Activated CD8-positive, alpha-beta T cell treated with anti-CD3 and anti-CD28 coated beads, Interleukin-2, amount 10 ng/mL, durations not matched to agents 7 days and 5 days (primary cell): ENCODE measurements at regions of chr13 and their contacts with region 1.

Region 1: DNA sequence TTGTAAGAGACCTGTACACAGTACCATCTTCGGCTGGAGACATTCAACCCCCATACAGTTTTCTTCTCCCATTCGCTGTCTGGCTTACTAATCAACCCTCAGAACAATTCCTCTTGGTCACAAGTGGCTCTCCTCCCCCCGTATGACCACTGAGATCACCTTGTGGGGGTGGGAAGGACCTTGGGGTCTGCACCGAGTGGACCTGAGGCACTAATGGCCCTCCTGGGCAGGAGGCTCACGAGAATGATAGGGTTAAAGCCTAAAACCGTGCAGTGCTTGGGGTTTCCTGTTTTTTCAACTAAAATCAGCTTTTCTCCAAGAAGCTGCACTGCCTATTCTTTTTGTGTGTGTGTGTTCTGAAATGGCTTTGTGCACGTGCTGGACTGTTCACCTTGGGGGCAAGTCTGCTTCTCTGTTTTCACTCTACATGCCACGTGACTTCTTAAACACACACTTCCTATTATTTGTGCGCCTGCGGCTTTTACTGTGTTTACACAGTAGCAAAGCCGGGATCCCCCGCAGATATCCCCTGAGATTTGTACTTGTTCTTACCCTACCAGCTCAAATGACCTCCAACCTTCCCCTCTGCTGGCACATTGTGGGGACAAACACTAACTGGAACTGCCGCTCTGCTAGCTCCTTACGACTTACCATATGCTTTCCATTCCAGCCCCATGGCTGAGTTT is 12.3 kb downstream of the RBM26 start:
- DNase-seq: peak; percentile 59
- ATAC-seq: peak; percentile 58
- H3K4me3 Mint-ChIP-seq: peak overlapping the region; percentile 48
- H3K27ac Mint-ChIP-seq: peak overlapping the region; percentile 68
- H3K4me1 Mint-ChIP-seq: peaks cover 50% of the 10 kb centered on the region
- H3K27me3 Mint-ChIP-seq: no peaks in the 10 kb centered on the region

Region 2: DNA sequence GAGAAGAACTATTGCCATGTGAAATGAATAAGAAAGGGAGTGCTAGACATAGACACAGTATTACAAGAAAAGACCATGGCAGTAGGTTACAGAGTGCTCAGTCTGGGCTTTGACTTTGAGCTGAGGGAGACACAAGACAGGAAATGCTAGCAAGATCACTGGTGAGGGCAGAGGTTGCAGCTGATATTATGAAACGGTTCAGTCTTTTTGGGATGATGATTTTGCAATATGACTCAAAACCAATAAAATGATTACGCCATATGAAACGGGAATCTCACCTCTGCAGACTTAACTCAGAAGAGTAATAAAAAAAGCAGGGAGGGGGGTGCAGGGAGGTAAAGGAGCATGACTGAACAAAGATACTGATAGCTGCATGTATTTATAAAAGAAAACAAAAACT is 110.7 kb before region 1 on chr13:
- CTCF ChIA-PET with region 1: no interaction called
- POLR2A ChIA-PET with region 1: no interaction called
- DNase-seq: no peak
- ATAC-seq: no peak
- H3K4me3 Mint-ChIP-seq: no peak overlapping the region
- H3K27ac Mint-ChIP-seq: no peak overlapping the region
- H3K4me1 Mint-ChIP-seq: no peaks in the 10 kb centered on the region
- H3K27me3 Mint-ChIP-seq: no peaks in the 10 kb centered on the region

Region 3: GRCh38 chr13:79382545-79383289 is 11.0 kb before region 1 on chr13:
- CTCF ChIA-PET with region 1: interaction called, 33 read pairs
- POLR2A ChIA-PET with region 1: interaction called, 3 read pairs
- DNase-seq: no peak
- ATAC-seq: peak; percentile 38
- H3K4me3 Mint-ChIP-seq: peak overlapping the region; percentile 50
- H3K27ac Mint-ChIP-seq: peak overlapping the region; percentile 64
- H3K4me1 Mint-ChIP-seq: peaks cover 53% of the 10 kb centered on the region
- H3K27me3 Mint-ChIP-seq: no peaks in the 10 kb centered on the region

Region 4: DNA sequence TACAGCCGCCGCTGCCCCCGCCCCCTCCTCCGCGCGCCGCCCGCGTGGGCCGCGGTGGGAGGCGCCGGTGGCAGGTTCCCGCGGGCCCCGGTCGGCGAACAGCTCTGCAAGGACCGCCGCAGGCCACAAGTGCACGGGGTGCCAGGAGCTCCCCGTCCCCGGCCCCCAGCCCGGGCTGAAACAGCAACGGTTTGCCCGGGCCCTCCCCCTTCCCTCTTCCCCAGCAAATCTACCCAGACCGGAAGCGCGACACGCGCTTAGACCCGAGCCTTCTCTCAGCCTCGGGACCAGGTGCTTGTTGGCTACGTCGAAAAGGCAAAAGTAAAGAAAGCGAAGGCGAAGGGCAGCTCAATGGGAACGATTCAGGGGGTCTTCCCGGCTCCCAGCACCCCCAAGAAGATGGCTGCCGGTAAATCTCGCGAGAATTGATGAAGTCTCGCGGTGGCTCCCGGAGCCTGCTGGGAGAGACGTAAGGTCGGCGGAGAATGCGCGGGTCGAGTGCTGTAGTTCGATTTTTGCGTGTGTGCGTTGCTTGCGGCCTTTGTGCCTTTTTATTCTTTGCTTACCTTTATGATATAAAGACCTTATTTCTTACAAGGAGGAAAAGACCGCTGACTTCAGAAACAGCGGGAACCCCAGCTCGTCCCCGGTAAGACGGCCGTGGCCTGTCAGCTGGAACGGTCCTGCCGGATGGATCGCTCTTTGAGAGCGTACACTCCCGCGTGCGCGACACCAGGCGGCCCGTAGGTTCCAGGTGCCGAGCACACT is 12.3 kb after region 1 on chr13 and contains the start of gene RBM26:
- CTCF ChIA-PET with region 1: interaction called, 12 read pairs
- POLR2A ChIA-PET with region 1: interaction called, 22 read pairs
- DNase-seq: peak; percentile 97
- ATAC-seq: peak; percentile 90
- H3K4me3 Mint-ChIP-seq: no peak within 1 kb of the TSS
- H3K27ac Mint-ChIP-seq: peak within 1 kb of the TSS; percentile 97
- H3K4me1 Mint-ChIP-seq: peaks cover 22% of the 10 kb centered on the region
- H3K27me3 Mint-ChIP-seq: no peaks in the 10 kb centered on the region
- total RNA-seq, gene RBM26: 50.6 to 52.0 TPM

Region 5: GRCh38 chr13:79703772-79704171 is 310.1 kb after region 1 on chr13:
- CTCF ChIA-PET with region 1: no interaction called
- POLR2A ChIA-PET with region 1: no interaction called
- DNase-seq: no peak
- ATAC-seq: no peak
- H3K4me3 Mint-ChIP-seq: no peak overlapping the region
- H3K27ac Mint-ChIP-seq: no peak overlapping the region
- H3K4me1 Mint-ChIP-seq: no peaks in the 10 kb centered on the region
- H3K27me3 Mint-ChIP-seq: no peaks in the 10 kb centered on the region